ENCODE measurements at regions of chr2 and their contacts with region 1.

Region 1: GRCh38 chr2:85538486-85539360 is at the start of gene MAT2A:
- DNase-seq: peak; percentile 96
- ATAC-seq: peak; percentile 72
- H3K4me3 Mint-ChIP-seq: peak within 1 kb of the TSS; percentile 94
- H3K27ac Mint-ChIP-seq: peak within 1 kb of the TSS; percentile 94
- H3K4me1 Mint-ChIP-seq: peaks cover 33% of the 10 kb centered on the region
- H3K27me3 Mint-ChIP-seq: no peaks in the 10 kb centered on the region
- total RNA-seq, gene MAT2A: 218 to 222 TPM

Region 2: GRCh38 chr2:85354286-85355072 is 184.2 kb before region 1 on chr2 and contains the starts of genes ELMOD3 and RETSAT:
- POLR2A ChIA-PET with region 1: interaction called, 18 read pairs
- DNase-seq: peak; percentile 90
- ATAC-seq: peak; percentile 100
- H3K4me3 Mint-ChIP-seq: peak within 1 kb of the TSS; percentile 92
- H3K27ac Mint-ChIP-seq: peak within 1 kb of the TSS; percentile 95
- H3K4me1 Mint-ChIP-seq: peaks cover 29% of the 10 kb centered on the region
- H3K27me3 Mint-ChIP-seq: no peaks in the 10 kb centered on the region
- total RNA-seq, gene ELMOD3: 23.1 to 26.4 TPM
- total RNA-seq, gene RETSAT: 28.8 to 29.7 TPM

Region 3: GRCh38 chr2:85409845-85410583 is 128.7 kb before region 1 on chr2 and contains the start of gene CAPG:
- POLR2A ChIA-PET with region 1: interaction called, 40 read pairs
- DNase-seq: peak; percentile 73
- ATAC-seq: peak; percentile 42
- H3K4me3 Mint-ChIP-seq: peak within 1 kb of the TSS; percentile 88
- H3K27ac Mint-ChIP-seq: peak within 1 kb of the TSS; percentile 82
- H3K4me1 Mint-ChIP-seq: peaks cover 60% of the 10 kb centered on the region
- H3K27me3 Mint-ChIP-seq: peaks cover 4% of the 10 kb centered on the region
- total RNA-seq, gene CAPG: 263 to 279 TPM

Region 4: GRCh38 chr2:85430752-85431569 is 107.8 kb before region 1 on chr2:
- POLR2A ChIA-PET with region 1: interaction called, 13 read pairs
- DNase-seq: no peak
- ATAC-seq: no peak
- H3K4me3 Mint-ChIP-seq: no peak overlapping the region
- H3K27ac Mint-ChIP-seq: no peak overlapping the region
- H3K4me1 Mint-ChIP-seq: peaks cover 5% of the 10 kb centered on the region
- H3K27me3 Mint-ChIP-seq: no peaks in the 10 kb centered on the region

Region 5: GRCh38 chr2:85551698-85552678 is 13.3 kb after region 1 on chr2:
- POLR2A ChIA-PET with region 1: interaction called, 39 read pairs
- DNase-seq: peak; percentile 81
- ATAC-seq: peak; percentile 90
- H3K4me3 Mint-ChIP-seq: no peak overlapping the region
- H3K27ac Mint-ChIP-seq: peak overlapping the region; percentile 56
- H3K4me1 Mint-ChIP-seq: peaks cover 8% of the 10 kb centered on the region
- H3K27me3 Mint-ChIP-seq: no peaks in the 10 kb centered on the region

Region 6: GRCh38 chr2:85584857-85585783 is 46.4 kb after region 1 on chr2:
- POLR2A ChIA-PET with region 1: interaction called, 18 read pairs
- DNase-seq: peak; percentile 59
- ATAC-seq: peak; percentile 36
- H3K4me3 Mint-ChIP-seq: peak overlapping the region; percentile 97
- H3K27ac Mint-ChIP-seq: peak overlapping the region; percentile 92
- H3K4me1 Mint-ChIP-seq: peaks cover 55% of the 10 kb centered on the region
- H3K27me3 Mint-ChIP-seq: no peaks in the 10 kb centered on the region

Measured in activated naive CD8-positive, alpha-beta T cell treated with anti-CD3 and anti-CD28 coated beads, Interleukin-2, amount 10 ng/mL, durations not matched to agents 7 days and 5 days (primary cell).